B cell (primary cell): ENCODE measurements at regions of chr12 and their contacts with region 1.

Region 1: GRCh38 chr12:45388545-45388944 is 172.7 kb downstream of the ANO6 start:
- DNase-seq: peak; percentile 12
- ATAC-seq: no peak
- H3K4me3 ChIP-seq: no peak overlapping the region
- H3K4me3 Mint-ChIP-seq: no peak overlapping the region
- H3K27ac ChIP-seq: no peak overlapping the region
- H3K27ac Mint-ChIP-seq: no peak overlapping the region
- H3K4me1 ChIP-seq: no peaks in the 10 kb centered on the region
- H3K4me1 Mint-ChIP-seq: no peaks in the 10 kb centered on the region
- H3K27me3 ChIP-seq: no peaks in the 10 kb centered on the region
- H3K27me3 Mint-ChIP-seq: no peaks in the 10 kb centered on the region
- CTCF ChIP-seq: no peak

Region 2: DNA sequence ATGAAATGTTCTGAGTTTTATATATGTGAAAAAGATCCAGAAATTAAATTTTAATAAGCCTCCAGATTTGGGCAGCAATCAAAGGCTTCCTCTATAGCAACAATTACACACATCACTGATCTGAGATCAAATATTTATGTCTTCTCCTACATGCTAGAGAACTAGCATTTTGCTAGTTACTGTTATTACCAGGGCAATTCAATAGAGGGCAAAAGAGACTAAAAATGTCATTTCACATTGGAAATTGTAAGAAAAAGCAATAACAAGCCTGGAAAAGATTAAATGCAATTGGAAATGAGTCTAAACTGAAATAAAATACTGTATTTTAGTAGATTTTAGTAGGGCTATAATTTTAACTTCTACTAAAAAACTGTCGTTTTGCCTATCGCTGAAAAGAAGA is 205.3 kb before region 1 on chr12:
- CTCF ChIA-PET with region 1: interaction called, 12 read pairs
- POLR2A ChIA-PET with region 1: no interaction called
- intact Hi-C with region 1: no loop called
- DNase-seq: no peak
- ATAC-seq: no peak
- H3K4me3 ChIP-seq: no peak overlapping the region
- H3K4me3 Mint-ChIP-seq: no peak overlapping the region
- H3K27ac ChIP-seq: no peak overlapping the region
- H3K27ac Mint-ChIP-seq: no peak overlapping the region
- H3K4me1 ChIP-seq: peaks cover 5 to 12% of the 10 kb centered on the region in 2 donors
- H3K4me1 Mint-ChIP-seq: peaks cover 11% of the 10 kb centered on the region
- H3K27me3 ChIP-seq: no peaks in the 10 kb centered on the region
- H3K27me3 Mint-ChIP-seq: no peaks in the 10 kb centered on the region
- CTCF ChIP-seq: no peak

Region 3: GRCh38 chr12:45446008-45446407 is 57.5 kb after region 1 on chr12:
- CTCF ChIA-PET with region 1: no interaction called
- POLR2A ChIA-PET with region 1: no interaction called
- intact Hi-C with region 1: no loop called
- DNase-seq: no peak
- ATAC-seq: no peak
- H3K4me3 ChIP-seq: no peak overlapping the region
- H3K4me3 Mint-ChIP-seq: no peak overlapping the region
- H3K27ac ChIP-seq: no peak overlapping the region
- H3K27ac Mint-ChIP-seq: no peak overlapping the region
- H3K4me1 ChIP-seq: no peaks in the 10 kb centered on the region
- H3K4me1 Mint-ChIP-seq: no peaks in the 10 kb centered on the region
- H3K27me3 ChIP-seq: peaks cover 0 to 4% (median 1%) of the 10 kb centered on the region in 4 experiments
- H3K27me3 Mint-ChIP-seq: peaks cover 8% of the 10 kb centered on the region
- CTCF ChIP-seq: no peak